GM18951 (cell line): ENCODE measurements at regions of chr2 and their contacts with region 1.

Region 1: DNA sequence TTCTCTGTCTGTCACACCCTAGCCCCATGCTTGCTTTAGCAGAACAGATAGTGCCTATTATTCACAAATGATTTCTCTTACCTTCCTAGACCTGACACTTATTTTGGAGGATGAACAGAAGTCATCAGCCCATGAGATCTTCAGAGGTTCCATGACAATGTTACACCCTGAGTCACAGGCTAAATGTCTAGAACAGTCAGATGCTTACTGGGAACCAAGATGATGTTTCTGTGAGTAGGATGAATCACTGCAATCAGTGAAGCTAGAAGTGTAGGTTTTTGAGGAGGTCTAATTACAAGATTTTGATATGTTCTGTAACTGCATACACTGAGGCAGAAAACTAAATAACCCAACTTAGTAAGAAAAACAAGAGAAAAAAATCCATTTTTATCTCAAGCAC is 123.0 kb upstream of the THUMPD2 start:
- POLR2A ChIP-seq: no peak

Region 2: DNA sequence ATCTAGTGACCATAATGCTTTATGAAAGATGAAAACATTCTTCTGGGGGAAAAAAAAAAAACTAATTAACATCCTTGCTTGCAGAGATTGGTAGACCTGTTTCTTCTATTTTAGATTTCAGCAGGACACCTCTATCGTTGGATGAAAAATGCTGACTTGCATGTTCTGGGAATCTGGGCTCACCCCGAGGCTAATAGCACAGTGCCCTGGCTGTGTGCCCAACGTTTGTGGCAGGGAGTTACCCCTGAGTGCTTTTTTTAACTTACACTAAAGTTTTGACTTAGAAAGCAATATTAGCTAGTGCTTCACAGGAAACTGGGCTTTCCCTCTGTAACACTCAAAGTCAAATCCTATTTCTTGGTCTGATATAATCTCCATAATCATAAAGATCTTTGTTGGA is 316.6 kb after region 1 on chr2:
- in situ Hi-C with region 1: no loop called
- POLR2A ChIP-seq: no peak

Region 3: DNA sequence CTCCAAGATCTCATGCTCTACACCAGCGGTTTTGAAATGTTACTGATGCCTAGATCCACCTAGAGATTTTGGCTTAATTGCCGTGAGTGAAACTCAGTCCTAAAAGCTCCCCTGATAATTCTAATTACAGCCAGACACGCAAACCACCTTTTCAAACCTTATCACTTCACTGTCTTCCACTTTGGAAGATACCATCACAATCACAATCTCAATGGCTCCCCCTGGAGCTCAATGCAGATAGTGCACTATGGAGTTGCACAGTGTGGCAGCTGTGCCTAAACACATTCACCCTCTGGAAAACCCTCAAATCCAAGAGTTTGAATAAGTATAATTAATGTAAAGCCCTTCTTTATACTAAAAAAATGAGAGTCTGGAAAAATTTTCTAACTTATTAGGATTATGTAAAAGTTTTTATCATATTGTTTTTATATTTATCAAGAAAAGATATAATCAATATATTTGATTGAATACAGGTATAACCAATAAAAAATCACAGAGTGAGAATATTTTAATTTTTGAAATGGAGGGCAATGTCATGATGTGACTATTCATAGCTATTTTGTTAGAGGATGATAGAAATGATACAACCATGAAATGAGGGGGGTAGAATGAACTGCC is 652.7 kb after region 1 on chr2:
- in situ Hi-C with region 1: loop called (anchors 10 kb)
- POLR2A ChIP-seq: no peak